Lower leg skin (tissue), 4 donors: ENCODE measurements at regions of chr16 and their contacts with region 1.

Region 1: DNA sequence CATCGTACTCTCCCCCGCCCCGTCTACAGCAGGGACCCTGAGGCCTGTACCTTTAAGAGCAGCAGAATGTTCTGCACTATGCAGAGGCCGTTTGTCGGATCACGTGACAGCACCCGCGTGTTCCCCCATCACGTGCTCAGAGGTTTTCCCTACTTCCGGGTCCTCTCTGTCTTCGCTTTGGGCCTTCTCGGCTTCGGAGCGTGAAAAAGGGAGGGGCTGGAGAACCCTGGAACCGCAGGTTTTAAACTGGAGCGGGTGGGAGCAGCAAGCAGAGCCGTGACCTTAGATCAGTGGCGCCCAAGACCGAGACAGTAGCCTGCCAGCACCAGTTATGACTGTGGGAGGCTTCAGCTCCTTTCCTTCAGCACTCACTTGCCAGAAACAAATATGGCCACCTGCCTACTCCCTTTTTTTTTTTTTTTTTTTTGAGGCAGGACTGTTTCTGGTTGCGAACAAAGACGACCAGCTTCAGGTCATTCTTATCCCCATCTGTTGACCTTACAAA is at the start of gene CLN3:
- DNase-seq: peak; percentile 95 to 98
- H3K4me3 ChIP-seq: peak within 1 kb of the TSS; percentile 98
- CTCF ChIP-seq: no peak
- POLR2A ChIP-seq: no peak
- total RNA-seq, gene CLN3: 32.2 to 52.7 (median 43.6) TPM

Region 2: GRCh38 chr16:28531777-28532744 is 40.0 kb after region 1 on chr16:
- intact Hi-C with region 1: loop called (anchors 5 kb)
- DNase-seq: peak; percentile 83 to 94
- H3K4me3 ChIP-seq: no peak overlapping the region
- CTCF ChIP-seq: no peak
- POLR2A ChIP-seq: no peak